ENCODE measurements at regions of chr1 and their contacts with region 1.

Region 1: DNA sequence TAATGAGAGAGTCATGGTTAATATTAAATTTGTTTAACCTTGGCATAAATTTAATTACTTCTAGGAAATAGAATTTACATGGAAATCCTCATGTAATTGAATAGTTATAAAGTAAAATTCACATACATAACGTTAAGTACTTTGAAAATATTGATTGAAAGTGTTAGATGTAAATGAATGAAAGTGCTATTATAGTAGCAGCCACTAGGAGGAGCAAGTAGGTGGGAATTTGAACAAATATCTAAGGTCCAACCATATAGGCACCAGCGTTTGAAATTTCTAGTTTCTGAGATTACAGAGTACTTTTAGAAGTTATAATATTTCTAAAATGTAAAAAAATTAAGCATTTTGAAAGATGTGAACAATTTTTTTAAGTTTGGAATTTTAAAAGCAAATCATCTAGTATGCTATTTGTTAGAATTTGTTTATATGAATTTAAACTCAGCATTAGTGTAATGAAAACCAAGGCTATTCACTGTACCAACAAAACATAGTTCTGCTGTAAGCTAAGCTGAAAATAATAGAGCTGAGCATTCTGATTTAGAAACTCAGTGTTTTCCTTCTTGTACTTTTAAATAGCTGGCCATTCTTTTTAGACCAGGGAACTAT is 3.3 kb downstream of the B3GALT2 start:
- DNase-seq: peak in 7 of 9 donors; percentile 21 to 62 (median 56)
- ATAC-seq: peak; percentile 85
- H3K4me3 ChIP-seq: no peak overlapping the region
- H3K4me3 Mint-ChIP-seq: no peak overlapping the region
- H3K27ac ChIP-seq: no peak overlapping the region
- H3K27ac Mint-ChIP-seq: no peak overlapping the region
- H3K4me1 ChIP-seq: peaks cover 0 to 8% of the 10 kb centered on the region in 2 donors
- H3K4me1 Mint-ChIP-seq: peaks cover 24 to 77% (median 58%) of the 10 kb centered on the region in 7 donors
- H3K27me3 ChIP-seq: no peaks in the 10 kb centered on the region
- H3K27me3 Mint-ChIP-seq: no peaks in the 10 kb centered on the region

Region 2: GRCh38 chr1:193140254-193140653 is 42.9 kb before region 1 on chr1:
- CTCF ChIA-PET with region 1: no interaction called
- POLR2A ChIA-PET with region 1: no interaction called
- intact Hi-C with region 1: no loop called
- DNase-seq: no peak
- ATAC-seq: no peak
- H3K4me3 ChIP-seq: no peak overlapping the region
- H3K4me3 Mint-ChIP-seq: no peak overlapping the region
- H3K27ac ChIP-seq: no peak overlapping the region
- H3K27ac Mint-ChIP-seq: peak overlapping the region in 1 of 9 donors; percentile 42
- H3K4me1 ChIP-seq: no peaks in the 10 kb centered on the region
- H3K4me1 Mint-ChIP-seq: peaks cover 11 to 46% (median 40%) of the 10 kb centered on the region in 7 donors
- H3K27me3 ChIP-seq: no peaks in the 10 kb centered on the region
- H3K27me3 Mint-ChIP-seq: no peaks in the 10 kb centered on the region

Region 3: GRCh38 chr1:193211539-193211938 is 28.4 kb after region 1 on chr1:
- CTCF ChIA-PET with region 1: interaction called, 3 read pairs
- POLR2A ChIA-PET with region 1: no interaction called
- intact Hi-C with region 1: loop called in 1 of 2 experiments (anchors 2 kb)
- DNase-seq: no peak
- ATAC-seq: no peak
- H3K4me3 ChIP-seq: no peak overlapping the region
- H3K4me3 Mint-ChIP-seq: no peak overlapping the region
- H3K27ac ChIP-seq: no peak overlapping the region
- H3K27ac Mint-ChIP-seq: peak overlapping the region in 4 of 9 donors; percentile 7 to 80 (median 32)
- H3K4me1 ChIP-seq: no peaks in the 10 kb centered on the region
- H3K4me1 Mint-ChIP-seq: peaks cover 13 to 36% (median 26%) of the 10 kb centered on the region in 7 donors
- H3K27me3 ChIP-seq: no peaks in the 10 kb centered on the region
- H3K27me3 Mint-ChIP-seq: no peaks in the 10 kb centered on the region

Region 4: GRCh38 chr1:193338194-193338593 is 155.1 kb after region 1 on chr1:
- CTCF ChIA-PET with region 1: no interaction called
- POLR2A ChIA-PET with region 1: no interaction called
- intact Hi-C with region 1: loop called in 1 of 2 experiments (anchors 1 kb)
- DNase-seq: no peak
- ATAC-seq: no peak
- H3K4me3 ChIP-seq: no peak overlapping the region
- H3K4me3 Mint-ChIP-seq: no peak overlapping the region
- H3K27ac ChIP-seq: no peak overlapping the region
- H3K27ac Mint-ChIP-seq: no peak overlapping the region
- H3K4me1 ChIP-seq: no peaks in the 10 kb centered on the region
- H3K4me1 Mint-ChIP-seq: peaks cover 0 to 6% (median 0%) of the 10 kb centered on the region in 7 donors
- H3K27me3 ChIP-seq: no peaks in the 10 kb centered on the region
- H3K27me3 Mint-ChIP-seq: peaks cover 0 to 2% (median 0%) of the 10 kb centered on the region in 5 donors

Region 5: DNA sequence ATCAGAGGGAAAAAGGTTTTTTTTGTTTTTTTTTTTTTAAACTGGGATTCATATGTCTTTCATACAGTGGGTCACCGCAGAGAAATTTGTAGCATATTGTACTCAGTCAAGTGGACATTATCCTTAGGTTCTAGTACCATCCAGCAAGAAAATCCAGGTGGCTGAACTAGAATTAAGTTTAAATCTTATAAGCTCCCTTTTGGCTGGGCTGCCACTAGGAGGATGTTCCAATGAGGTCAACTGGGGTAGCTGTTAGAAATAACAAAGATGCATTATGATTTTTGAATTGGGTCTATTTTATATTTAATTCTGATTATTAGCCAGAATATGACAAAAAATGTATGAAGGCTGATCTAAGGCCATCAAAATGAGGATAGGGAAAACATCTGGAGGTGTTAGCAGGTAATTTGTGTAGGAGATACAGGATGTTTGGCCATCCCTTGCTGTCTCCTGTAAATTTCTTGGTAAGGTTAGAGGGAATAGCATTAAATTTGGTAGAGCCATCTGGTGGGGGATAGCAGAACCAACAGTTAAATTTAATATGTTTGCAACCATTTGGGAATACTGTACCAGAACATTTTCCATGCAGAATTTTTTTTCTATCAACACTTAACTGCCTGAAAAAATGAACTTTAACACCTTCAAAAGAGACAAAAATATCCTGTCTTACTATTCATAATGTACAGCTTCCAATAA is 571.8 kb after region 1 on chr1:
- CTCF ChIA-PET with region 1: interaction called, 3 read pairs
- POLR2A ChIA-PET with region 1: no interaction called
- intact Hi-C with region 1: loop called in 1 of 2 experiments (anchors 2 kb)
- DNase-seq: no peak
- ATAC-seq: no peak
- H3K4me3 ChIP-seq: no peak overlapping the region
- H3K4me3 Mint-ChIP-seq: no peak overlapping the region
- H3K27ac ChIP-seq: no peak overlapping the region
- H3K27ac Mint-ChIP-seq: no peak overlapping the region
- H3K4me1 ChIP-seq: no peaks in the 10 kb centered on the region
- H3K4me1 Mint-ChIP-seq: peaks cover 0 to 6% (median 0%) of the 10 kb centered on the region in 7 donors
- H3K27me3 ChIP-seq: no peaks in the 10 kb centered on the region
- H3K27me3 Mint-ChIP-seq: no peaks in the 10 kb centered on the region

Region 6: DNA sequence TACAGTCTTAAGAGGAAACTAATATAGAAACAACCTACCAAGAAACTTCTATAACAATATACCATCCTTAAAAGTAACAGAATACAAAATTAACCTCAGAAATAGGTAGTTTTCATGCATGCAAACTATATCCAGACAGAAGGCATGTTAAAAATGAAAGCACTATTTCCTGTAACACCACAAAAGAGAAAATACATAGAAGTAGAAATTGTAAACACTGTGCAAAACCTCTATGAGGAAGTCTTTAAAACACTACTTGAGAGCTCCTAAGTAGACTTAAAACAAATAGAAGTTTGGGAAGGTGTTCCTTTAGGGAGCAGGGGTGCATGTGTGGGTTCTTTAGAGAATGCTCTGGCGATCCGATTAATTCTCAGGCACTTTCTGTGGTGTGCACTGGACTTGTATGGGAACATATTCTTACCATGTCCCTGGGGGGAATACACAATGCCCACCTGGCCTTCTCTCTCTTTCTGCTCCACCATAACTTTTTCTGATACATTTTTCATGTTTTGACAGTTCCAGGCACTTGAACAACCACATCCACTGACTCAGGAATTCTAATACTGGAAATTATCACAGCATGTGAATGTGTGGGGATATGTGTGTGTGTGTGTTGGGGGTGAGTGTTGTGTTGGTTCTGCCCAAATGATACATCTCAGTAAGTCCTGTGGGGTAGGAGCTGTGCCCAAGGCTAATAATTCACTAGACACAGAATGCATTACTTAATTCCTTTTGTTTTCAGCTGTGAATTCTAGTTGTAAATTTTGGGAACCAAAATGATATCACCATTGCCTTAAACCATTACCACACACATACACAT is 869.6 kb after region 1 on chr1:
- CTCF ChIA-PET with region 1: no interaction called
- POLR2A ChIA-PET with region 1: no interaction called
- intact Hi-C with region 1: loop called in 1 of 2 experiments (anchors 10 kb)
- DNase-seq: peak in 6 of 9 donors; percentile 21 to 54 (median 44)
- ATAC-seq: peak; percentile 56
- H3K4me3 ChIP-seq: peak overlapping the region; percentile 9
- H3K4me3 Mint-ChIP-seq: peak overlapping the region; percentile 41 to 83 (median 71)
- H3K27ac ChIP-seq: peak overlapping the region; percentile 63
- H3K27ac Mint-ChIP-seq: peak overlapping the region; percentile 93 to 98 (median 96)
- H3K4me1 ChIP-seq: peaks cover 7 to 61% of the 10 kb centered on the region in 2 donors
- H3K4me1 Mint-ChIP-seq: peaks cover 43 to 82% (median 69%) of the 10 kb centered on the region in 7 donors
- H3K27me3 ChIP-seq: no peaks in the 10 kb centered on the region
- H3K27me3 Mint-ChIP-seq: no peaks in the 10 kb centered on the region

Region 7: DNA sequence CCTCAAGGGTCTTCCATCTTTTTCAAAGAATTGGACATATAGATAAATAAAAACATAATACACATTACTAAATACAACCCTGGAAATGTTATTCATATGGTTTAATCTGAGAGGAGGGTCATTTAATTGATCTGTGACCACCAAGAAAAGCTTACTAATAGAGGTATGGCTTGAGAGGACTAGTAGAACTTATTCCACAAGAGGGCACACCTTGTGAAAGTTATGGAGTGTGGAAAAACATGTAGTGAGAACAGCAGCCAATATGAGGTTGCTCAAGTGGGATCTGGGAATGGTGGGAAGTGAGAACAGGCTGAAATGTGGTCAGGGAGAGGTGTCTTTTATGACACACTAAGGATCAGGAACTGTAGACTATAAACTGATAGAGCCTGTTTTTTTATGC is 976.8 kb after region 1 on chr1:
- CTCF ChIA-PET with region 1: no interaction called
- POLR2A ChIA-PET with region 1: no interaction called
- intact Hi-C with region 1: loop called in 1 of 2 experiments (anchors 5 kb)
- DNase-seq: no peak
- ATAC-seq: no peak
- H3K4me3 ChIP-seq: no peak overlapping the region
- H3K4me3 Mint-ChIP-seq: no peak overlapping the region
- H3K27ac ChIP-seq: no peak overlapping the region
- H3K27ac Mint-ChIP-seq: peak overlapping the region in 1 of 9 donors; percentile 5
- H3K4me1 ChIP-seq: no peaks in the 10 kb centered on the region
- H3K4me1 Mint-ChIP-seq: peaks cover 0 to 13% (median 10%) of the 10 kb centered on the region in 7 donors
- H3K27me3 ChIP-seq: no peaks in the 10 kb centered on the region
- H3K27me3 Mint-ChIP-seq: no peaks in the 10 kb centered on the region

Region 8: DNA sequence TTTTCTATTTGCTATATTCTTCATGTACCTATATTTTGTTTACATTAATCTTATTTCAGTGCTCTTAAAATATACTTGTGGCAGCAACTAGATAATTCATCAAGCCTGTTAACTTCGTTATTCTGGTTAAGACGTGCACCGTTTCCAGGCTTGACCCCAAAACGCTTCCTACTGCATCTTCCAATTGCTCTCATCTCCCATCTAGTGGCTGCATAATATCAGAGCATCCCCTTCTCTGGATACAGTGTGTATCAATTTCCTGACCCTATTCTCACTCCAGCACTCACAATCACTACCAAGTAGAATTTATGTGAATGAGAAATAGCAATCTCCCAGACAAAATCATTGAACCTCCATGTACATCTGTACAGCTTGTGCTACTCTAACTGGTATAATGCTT is 1283.6 kb after region 1 on chr1:
- CTCF ChIA-PET with region 1: no interaction called
- POLR2A ChIA-PET with region 1: no interaction called
- intact Hi-C with region 1: loop called in 1 of 2 experiments (anchors 10 kb)
- DNase-seq: no peak
- ATAC-seq: no peak
- H3K4me3 ChIP-seq: no peak overlapping the region
- H3K4me3 Mint-ChIP-seq: no peak overlapping the region
- H3K27ac ChIP-seq: no peak overlapping the region
- H3K27ac Mint-ChIP-seq: no peak overlapping the region
- H3K4me1 ChIP-seq: no peaks in the 10 kb centered on the region
- H3K4me1 Mint-ChIP-seq: peaks cover 0 to 2% (median 0%) of the 10 kb centered on the region in 7 donors
- H3K27me3 ChIP-seq: no peaks in the 10 kb centered on the region
- H3K27me3 Mint-ChIP-seq: peaks cover 0 to 9% (median 4%) of the 10 kb centered on the region in 5 donors